Common myeloid progenitor, CD34-positive (primary cell): ENCODE measurements at regions of chr1 and their contacts with region 1.

Region 1: DNA sequence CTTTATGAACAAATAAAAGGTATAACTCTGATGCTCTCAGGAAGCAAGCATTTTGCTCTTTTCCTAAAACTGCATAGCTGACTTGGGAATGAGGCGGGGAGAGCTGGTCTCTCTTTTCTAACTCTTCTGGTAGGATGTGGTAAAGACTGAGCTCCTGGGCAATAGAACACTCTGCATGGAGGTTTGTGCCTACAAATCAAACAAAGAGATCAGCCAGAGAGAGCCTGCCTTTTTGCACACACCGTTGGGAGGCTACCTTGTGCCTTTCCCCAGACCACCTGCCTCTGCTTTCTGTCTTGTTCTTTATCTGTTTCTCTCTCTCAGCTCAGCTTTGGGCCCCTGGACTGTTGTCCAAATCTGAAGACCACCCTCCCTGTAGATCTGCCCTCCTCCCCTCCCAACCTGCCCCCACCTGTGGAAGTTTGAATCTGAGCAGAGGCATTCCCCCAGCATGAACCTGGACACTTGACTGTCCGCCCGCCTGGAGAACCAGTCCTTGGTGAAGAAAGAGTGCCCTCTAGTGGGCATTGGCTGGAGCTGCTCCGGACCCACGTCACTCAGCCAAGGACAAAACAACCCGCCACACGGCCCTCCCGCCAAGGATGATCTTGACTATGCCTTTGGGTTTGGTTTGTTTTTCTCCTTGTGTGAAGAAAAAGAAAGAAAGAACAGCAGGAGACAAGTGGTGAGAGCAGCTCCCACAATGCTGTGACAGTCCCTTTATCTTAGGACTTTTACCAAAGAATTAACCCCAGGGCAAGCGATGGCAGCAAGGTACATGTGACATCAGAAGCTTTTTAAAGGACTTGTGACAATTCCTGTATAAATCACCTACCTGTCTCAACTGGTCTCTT is 228.2 kb downstream of the PBX1 start:
- DNase-seq: peak; percentile 57 to 78 (median 72)
- H3K4me3 ChIP-seq: peak overlapping the region in 1 of 7 experiments; percentile 11
- H3K27ac ChIP-seq: no peak overlapping the region
- H3K4me1 ChIP-seq: peaks cover 0 to 32% (median 7%) of the 10 kb centered on the region in 4 experiments
- H3K27me3 ChIP-seq: no peaks in the 10 kb centered on the region

Region 2: GRCh38 chr1:164602480-164603093 is 184.6 kb before region 1 on chr1:
- CTCF ChIA-PET with region 1: interaction called, 17 read pairs
- POLR2A ChIA-PET with region 1: no interaction called
- DNase-seq: peak in 2 of 3 donors; percentile 43 to 54
- H3K4me3 ChIP-seq: peak overlapping the region in 4 of 7 experiments; percentile 34 to 71 (median 51)
- H3K27ac ChIP-seq: peak overlapping the region; percentile 12 to 69
- H3K4me1 ChIP-seq: peaks cover 0 to 25% (median 9%) of the 10 kb centered on the region in 4 experiments
- H3K27me3 ChIP-seq: no peaks in the 10 kb centered on the region

Region 3: GRCh38 chr1:165073185-165074007 is 286.2 kb after region 1 on chr1:
- CTCF ChIA-PET with region 1: interaction called, 16 read pairs
- POLR2A ChIA-PET with region 1: no interaction called
- DNase-seq: peak; percentile 56 to 76 (median 69)
- H3K4me3 ChIP-seq: no peak overlapping the region
- H3K27ac ChIP-seq: no peak overlapping the region
- H3K4me1 ChIP-seq: no peaks in the 10 kb centered on the region
- H3K27me3 ChIP-seq: no peaks in the 10 kb centered on the region